PC-9 (cell line): ENCODE measurements at regions of chr19 and their contacts with region 1.

Region 1: DNA sequence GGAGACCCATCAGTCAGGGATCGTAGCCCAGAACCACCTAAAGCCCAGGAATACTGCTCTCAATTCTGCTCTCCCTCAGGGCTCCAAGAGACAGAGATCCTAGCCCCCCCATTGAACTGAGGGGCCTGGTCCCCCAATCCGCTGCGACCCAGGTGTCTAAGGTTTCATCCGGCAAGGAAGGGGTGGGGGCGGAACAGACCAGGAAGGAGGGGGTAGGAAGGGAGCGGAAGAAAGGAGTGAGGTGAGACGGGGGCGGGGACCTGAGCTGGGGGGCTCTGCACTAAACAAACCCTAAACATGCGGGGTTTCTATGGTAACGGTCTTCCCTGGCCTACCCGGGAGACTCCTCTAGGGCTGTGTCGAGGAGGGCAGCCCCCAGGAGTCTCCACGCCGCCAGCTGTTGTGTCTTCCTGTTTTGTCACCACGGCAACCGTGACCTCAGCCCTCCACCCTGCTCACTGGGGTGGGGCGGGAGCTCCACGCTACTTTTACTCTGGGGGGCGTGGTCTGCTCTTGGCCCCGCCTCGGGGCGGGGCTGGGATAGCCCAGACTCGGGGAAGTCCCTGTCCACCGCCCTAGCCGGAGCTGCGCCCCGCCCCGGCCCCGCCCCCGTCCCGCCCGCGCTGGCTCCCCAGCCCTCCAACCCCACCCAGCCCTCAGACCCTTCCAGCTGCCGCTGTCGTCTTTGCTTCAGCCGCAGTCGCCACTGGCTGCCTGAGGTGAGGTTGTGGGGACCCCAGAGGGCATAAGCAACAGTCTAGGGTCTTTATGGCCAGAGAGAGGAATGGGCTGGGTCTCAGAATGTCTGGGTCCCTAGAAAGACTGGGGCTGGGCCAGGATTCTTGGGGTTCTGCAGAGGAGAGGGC is at the start of gene MYADM:
- DNase-seq: peak; percentile 98 to 100
- H3K4me3 ChIP-seq: peak within 1 kb of the TSS; percentile 92
- H3K27ac ChIP-seq: peak within 1 kb of the TSS; percentile 99
- H3K4me1 ChIP-seq: peaks cover 28% of the 10 kb centered on the region
- H3K27me3 ChIP-seq: no peaks in the 10 kb centered on the region
- CTCF ChIP-seq: no peak
- total RNA-seq, gene MYADM: 230 and 238 TPM in 2 replicates

Region 2: DNA sequence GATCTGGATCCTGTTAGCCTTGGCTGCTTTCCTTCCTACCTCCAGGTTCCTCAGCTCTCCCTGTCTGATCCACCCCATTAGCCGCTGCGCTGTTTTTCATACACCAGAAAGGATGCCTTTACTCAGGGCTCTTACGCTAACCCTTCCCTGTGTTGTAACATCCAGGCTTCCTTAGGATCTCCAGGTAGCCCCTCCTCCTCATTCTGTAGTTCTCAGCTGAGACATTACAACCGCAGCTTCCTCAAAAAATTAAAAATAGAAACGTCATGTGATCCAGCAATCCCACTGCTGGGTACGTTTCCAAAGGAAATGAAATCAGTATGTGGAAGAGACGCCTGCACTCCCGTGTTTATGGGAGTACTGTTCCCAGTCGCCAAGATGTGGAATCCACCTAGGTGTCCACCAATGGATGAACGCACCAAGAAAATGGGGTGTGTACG is 18.2 kb before region 1 on chr19:
- CTCF ChIA-PET with region 1: interaction called, 3 read pairs
- POLR2A ChIA-PET with region 1: interaction called, 22 read pairs
- intact Hi-C with region 1: no loop called
- DNase-seq: no peak
- H3K4me3 ChIP-seq: no peak overlapping the region
- H3K27ac ChIP-seq: no peak overlapping the region
- H3K4me1 ChIP-seq: 0 out of 2 replicates have a peak, but pooled peaks cover 7% of the 10 kb centered on the region
- H3K27me3 ChIP-seq: no peaks in the 10 kb centered on the region
- CTCF ChIP-seq: no peak

Region 3: DNA sequence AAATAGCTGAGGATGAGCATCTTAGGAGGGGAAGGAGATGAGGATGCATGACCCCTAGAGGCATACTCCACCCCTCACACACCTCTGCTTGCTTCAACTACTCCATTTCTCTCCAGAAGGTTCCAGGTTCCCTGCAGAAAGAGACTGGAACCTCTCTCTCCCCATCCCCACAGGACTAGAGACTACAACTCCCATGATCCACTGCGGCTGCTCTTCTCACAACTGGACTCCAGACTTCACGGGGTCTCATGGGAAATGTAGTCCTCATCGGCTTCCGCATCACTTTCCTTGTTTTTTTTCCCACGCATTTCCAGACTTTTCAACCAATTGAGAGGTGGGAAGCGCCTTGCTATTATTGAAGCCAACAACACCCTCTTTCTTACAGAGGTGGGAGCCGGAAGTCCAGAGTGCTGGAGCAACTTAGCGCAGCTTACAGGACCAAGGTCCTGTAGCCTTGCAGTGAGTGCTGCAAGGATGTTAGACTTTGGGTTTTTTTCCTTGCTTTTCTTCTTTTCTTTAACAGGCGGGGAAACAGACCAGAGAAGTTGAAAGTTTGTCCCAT is 110.1 kb after region 1 on chr19:
- CTCF ChIA-PET with region 1: interaction called, 4 read pairs
- POLR2A ChIA-PET with region 1: interaction called, 49 read pairs
- intact Hi-C with region 1: loop called (anchors 1 kb)
- DNase-seq: peak; percentile 72 to 79
- H3K4me3 ChIP-seq: no peak overlapping the region
- H3K27ac ChIP-seq: no peak overlapping the region
- H3K4me1 ChIP-seq: peaks cover 6% of the 10 kb centered on the region; the same call in 1 of the 2 replicates
- H3K27me3 ChIP-seq: no peaks in the 10 kb centered on the region
- CTCF ChIP-seq: no peak

Region 4: GRCh38 chr19:54017261-54017660 is 149.8 kb after region 1 on chr19:
- CTCF ChIA-PET with region 1: no interaction called
- POLR2A ChIA-PET with region 1: no interaction called
- intact Hi-C with region 1: loop called (anchors 1 kb)
- DNase-seq: peak in 1 of 2 experiments; percentile 46
- H3K4me3 ChIP-seq: no peak overlapping the region
- H3K27ac ChIP-seq: no peak overlapping the region
- H3K4me1 ChIP-seq: peaks cover 44% of the 10 kb centered on the region
- H3K27me3 ChIP-seq: no peaks in the 10 kb centered on the region
- CTCF ChIP-seq: no peak

Region 5: DNA sequence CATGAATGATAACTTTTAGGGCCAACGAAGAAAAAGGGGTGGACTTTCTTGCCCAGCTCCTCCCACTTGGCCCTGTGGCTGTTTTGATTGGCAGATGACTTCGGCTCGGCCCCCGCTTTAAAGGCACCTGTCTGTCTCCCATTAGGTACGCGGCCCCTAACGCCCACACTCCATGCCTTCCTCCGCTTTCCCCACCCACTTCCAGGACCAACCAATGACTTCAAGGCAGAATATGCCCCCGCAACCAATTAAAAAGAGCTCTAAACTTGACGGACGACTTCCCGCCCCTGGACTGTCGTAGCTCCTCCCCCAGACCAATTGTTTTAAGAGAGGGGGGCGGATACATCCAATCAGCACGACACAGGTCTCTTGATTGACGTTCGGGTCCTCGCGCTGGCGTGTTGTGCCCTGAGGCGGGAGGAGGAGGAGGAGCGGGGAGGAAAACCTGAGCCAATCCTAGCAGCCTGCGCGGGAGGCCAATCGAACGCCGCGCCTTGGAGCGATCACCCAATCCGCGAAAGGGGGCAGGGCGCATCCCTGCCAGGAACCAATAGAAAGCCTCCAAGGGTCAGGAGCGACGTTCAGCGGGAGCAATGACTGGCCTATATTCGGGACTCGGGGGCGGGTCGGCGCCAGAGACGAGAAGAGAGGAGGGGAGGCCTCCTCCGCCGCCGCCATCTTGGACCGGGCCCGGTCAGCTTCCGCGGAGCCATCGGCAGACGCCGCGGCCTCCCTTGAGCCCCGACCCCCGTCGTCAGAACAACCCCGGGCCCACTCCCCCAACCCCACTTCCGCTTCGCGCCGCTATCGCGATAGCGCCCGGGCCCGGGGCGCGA is 269.8 kb after region 1 on chr19 and contains the start of gene CNOT3:
- CTCF ChIA-PET with region 1: interaction called, 3 read pairs
- POLR2A ChIA-PET with region 1: interaction called, 25 read pairs
- intact Hi-C with region 1: loop called (anchors 1 kb)
- DNase-seq: peak; percentile 100
- H3K4me3 ChIP-seq: peak within 1 kb of the TSS; percentile 83
- H3K27ac ChIP-seq: peak within 1 kb of the TSS; percentile 82
- H3K4me1 ChIP-seq: peaks cover 26% of the 10 kb centered on the region; the same call in 1 of the 2 replicates
- H3K27me3 ChIP-seq: no peaks in the 10 kb centered on the region
- CTCF ChIP-seq: no peak
- total RNA-seq, gene CNOT3: 83.0 and 89.1 TPM in 2 replicates

Region 6: GRCh38 chr19:54189735-54190502 is 322.5 kb after region 1 on chr19:
- CTCF ChIA-PET with region 1: no interaction called
- POLR2A ChIA-PET with region 1: interaction called, 13 read pairs
- intact Hi-C with region 1: no loop called
- DNase-seq: peak; percentile 100
- H3K4me3 ChIP-seq: peak overlapping the region; percentile 77
- H3K27ac ChIP-seq: peak overlapping the region; percentile 93
- H3K4me1 ChIP-seq: peaks cover 24% of the 10 kb centered on the region
- H3K27me3 ChIP-seq: no peaks in the 10 kb centered on the region
- CTCF ChIP-seq: no peak

Region 7: GRCh38 chr19:54463531-54464043 is 596.1 kb after region 1 on chr19 and contains the start of gene LENG9:
- CTCF ChIA-PET with region 1: no interaction called
- POLR2A ChIA-PET with region 1: no interaction called
- intact Hi-C with region 1: loop called (anchors 5 kb)
- DNase-seq: peak; percentile 97 to 99
- H3K4me3 ChIP-seq: peak within 1 kb of the TSS; percentile 77
- H3K27ac ChIP-seq: peak within 1 kb of the TSS; percentile 89
- H3K4me1 ChIP-seq: peaks cover 18% of the 10 kb centered on the region
- H3K27me3 ChIP-seq: no peaks in the 10 kb centered on the region
- CTCF ChIP-seq: no peak
- total RNA-seq, gene LENG9: 7.0 and 8.9 TPM in 2 replicates